Activated CD4-positive, alpha-beta memory T cell treated with anti-CD3 and anti-CD28 coated beads for 36 hours (primary cell): ENCODE measurements at regions of chr2 and their contacts with region 1.

Region 1: GRCh38 chr2:152925547-152926327 is 207.3 kb downstream of the ARL6IP6 start:
- DNase-seq: peak; percentile 66
- H3K4me3 Mint-ChIP-seq: no peak overlapping the region
- H3K27ac Mint-ChIP-seq: no peak overlapping the region
- H3K4me1 Mint-ChIP-seq: no peaks in the 10 kb centered on the region
- H3K27me3 Mint-ChIP-seq: peaks cover 2% of the 10 kb centered on the region

Region 2: DNA sequence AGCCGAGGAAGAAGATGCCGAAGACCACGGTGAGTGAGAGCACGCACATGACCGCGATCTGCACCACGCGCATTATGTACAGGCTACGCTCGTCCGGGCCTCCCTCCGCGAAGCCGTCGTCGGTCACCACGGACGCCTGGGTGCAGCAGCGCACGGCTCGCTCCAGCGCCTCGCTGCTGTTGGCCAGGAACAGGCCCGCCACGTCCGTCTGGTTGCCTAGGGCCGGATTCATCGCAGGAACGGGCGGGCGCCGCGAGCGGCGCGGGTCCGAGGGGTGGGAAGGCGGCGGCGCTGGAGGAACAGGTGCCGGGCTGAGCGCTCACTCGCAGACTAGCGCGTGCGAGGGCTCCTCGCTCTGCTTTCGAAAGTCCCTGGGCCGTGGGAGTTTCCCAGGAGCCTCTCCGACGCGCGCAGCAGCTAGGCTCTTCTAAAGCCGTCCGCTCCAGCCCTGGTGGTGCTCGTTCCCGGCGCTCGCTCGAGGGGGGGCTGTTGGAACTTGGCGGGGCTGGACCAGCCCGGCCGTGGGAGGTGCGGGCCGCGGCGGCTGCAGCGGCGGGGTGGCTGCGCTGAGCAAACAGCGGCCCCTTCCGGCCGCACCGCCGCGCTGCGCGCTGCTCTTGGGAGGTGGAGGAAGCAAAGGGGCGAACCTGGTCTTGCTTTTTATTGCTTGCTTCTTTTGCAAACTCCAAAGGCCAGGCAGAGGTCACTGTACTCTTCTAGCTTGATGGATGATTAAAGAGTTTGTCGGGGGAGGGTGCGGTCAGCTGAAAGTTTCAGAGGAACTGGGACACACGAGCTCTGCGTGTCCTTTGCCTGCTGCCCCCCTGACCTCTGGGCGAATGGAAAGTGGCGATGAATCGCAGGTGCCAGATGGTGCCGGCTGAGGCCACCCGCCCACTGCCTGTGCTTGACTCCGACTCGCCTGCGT is 552.9 kb after region 1 on chr2 and contains the start of gene RPRM:
- CTCF ChIA-PET with region 1: interaction called, 7 read pairs
- POLR2A ChIA-PET with region 1: no interaction called
- intact Hi-C with region 1: loop called (anchors 2 kb)
- DNase-seq: peak; percentile 66
- H3K4me3 Mint-ChIP-seq: peak within 1 kb of the TSS; percentile 6
- H3K27ac Mint-ChIP-seq: no peak within 1 kb of the TSS
- H3K4me1 Mint-ChIP-seq: peaks cover 17% of the 10 kb centered on the region
- H3K27me3 Mint-ChIP-seq: peaks cover 58% of the 10 kb centered on the region
- total RNA-seq, gene RPRM: not detected